Heart left ventricle (tissue), 16 donors: ENCODE measurements at regions of chr17 and their contacts with region 1.

Region 1: GRCh38 chr17:14300575-14301278 is at the start of gene HS3ST3B1:
- DNase-seq: peak; percentile 98 to 99 (median 98)
- ATAC-seq: peak; percentile 93 to 97 (median 96)
- H3K4me3 ChIP-seq: peak within 1 kb of the TSS; percentile 53 to 78 (median 62)
- H3K27ac ChIP-seq: peak within 1 kb of the TSS; percentile 35 to 90 (median 74)
- H3K4me1 ChIP-seq: peaks cover 0 to 76% (median 48%) of the 10 kb centered on the region in 12 donors
- H3K27me3 ChIP-seq: peaks cover 26 to 86% (median 63%) of the 10 kb centered on the region in 9 donors
- CTCF ChIP-seq: peak in 2 of 12 donors; percentile 22 to 33
- POLR2A ChIP-seq: peak; percentile 33 to 86
- total RNA-seq, gene HS3ST3B1: 1.8 to 3.9 (median 3.4) TPM

Region 2: GRCh38 chr17:13031718-13032350 is 1268.9 kb before region 1 on chr17:
- intact Hi-C with region 1: loop called in 2 of 10 experiments (anchors 10 kb)
- DNase-seq: peak in 4 of 5 donors; percentile 25 to 49 (median 34)
- ATAC-seq: peak in 3 of 4 donors; percentile 61 to 80 (median 65)
- H3K4me3 ChIP-seq: no peak overlapping the region
- H3K27ac ChIP-seq: no peak overlapping the region
- H3K4me1 ChIP-seq: peaks cover 0 to 6% (median 0%) of the 10 kb centered on the region in 12 donors
- H3K27me3 ChIP-seq: peaks cover 0 to 6% (median 0%) of the 10 kb centered on the region in 9 donors
- CTCF ChIP-seq: peak; percentile 66 to 86 (median 78)
- POLR2A ChIP-seq: no peak

Region 3: DNA sequence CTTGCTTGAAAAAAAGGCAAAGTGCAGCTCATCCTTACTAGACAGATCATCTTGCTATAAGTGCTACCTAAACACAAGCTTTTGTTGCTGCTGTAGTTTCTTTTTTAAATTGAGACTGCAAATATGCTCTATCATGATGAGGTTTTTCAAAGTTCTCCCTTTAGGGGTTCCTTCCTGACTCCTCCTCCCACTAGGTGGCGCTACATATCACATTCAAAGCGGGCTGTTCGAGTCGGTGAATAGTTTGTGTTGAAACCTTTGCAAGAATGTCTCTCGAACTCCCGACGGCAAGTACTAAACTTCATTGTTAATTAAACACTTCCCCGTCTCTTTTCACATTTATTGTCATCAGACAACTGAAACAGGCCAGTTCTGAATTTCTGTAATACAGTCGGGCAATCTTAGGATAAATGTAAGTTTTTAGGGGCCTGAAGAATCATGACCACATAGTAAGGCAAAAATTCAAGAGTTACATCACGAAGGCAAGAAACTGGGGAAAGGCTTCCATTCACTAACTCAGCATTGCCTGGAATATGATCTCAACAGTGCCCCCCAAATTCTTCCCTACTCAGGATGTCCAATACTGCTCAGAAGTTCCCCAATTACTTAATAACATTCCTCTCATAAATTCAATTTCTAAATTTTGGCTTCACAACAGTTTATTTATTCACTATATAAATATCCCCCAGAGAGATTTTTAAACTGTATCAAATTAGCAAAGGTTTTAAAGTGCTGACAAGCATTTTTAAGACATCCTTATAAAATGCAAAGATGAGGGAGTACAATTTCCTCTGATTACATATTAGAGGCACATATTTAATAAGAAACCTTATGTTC is 705.7 kb before region 1 on chr17:
- intact Hi-C with region 1: loop called (anchors 1 to 5 kb)
- DNase-seq: peak; percentile 55 to 77 (median 74)
- ATAC-seq: peak in 3 of 4 donors; percentile 65 to 73 (median 71)
- H3K4me3 ChIP-seq: no peak overlapping the region
- H3K27ac ChIP-seq: no peak overlapping the region
- H3K4me1 ChIP-seq: peaks cover 0 to 20% (median 3%) of the 10 kb centered on the region in 12 donors
- H3K27me3 ChIP-seq: peaks cover 0 to 27% (median 3%) of the 10 kb centered on the region in 9 donors
- CTCF ChIP-seq: peak; percentile 80 to 94 (median 87)
- POLR2A ChIP-seq: no peak

Region 4: DNA sequence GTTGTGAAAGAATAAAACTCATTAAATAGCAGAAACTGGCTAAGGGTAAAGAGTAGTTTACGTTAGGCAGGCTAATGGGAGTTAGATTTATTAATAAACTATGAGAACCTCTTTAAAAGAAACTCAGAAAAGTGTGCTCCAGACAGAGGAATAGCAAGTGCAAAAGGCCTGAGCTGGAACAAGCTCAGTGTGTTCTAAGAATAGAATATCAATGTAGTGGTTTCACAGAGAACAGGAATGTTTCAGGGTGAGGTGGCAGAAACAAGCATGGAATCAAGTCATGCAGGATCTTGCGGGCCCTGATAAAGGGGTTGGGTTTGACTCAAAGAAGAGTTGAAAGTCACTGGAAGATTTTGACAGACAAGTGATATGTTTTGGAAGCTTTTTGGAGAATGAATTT is 535.0 kb before region 1 on chr17:
- intact Hi-C with region 1: loop called in 1 of 10 experiments (anchors 10 kb)
- DNase-seq: peak in 1 of 5 donors; percentile 8
- ATAC-seq: peak; percentile 60 to 81 (median 78)
- H3K4me3 ChIP-seq: no peak overlapping the region
- H3K27ac ChIP-seq: peak overlapping the region in 7 of 12 donors; percentile 29 to 70 (median 39)
- H3K4me1 ChIP-seq: peaks cover 0 to 13% (median 0%) of the 10 kb centered on the region in 12 donors
- H3K27me3 ChIP-seq: no peaks in the 10 kb centered on the region
- CTCF ChIP-seq: no peak
- POLR2A ChIP-seq: no peak

Region 5: GRCh38 chr17:14211801-14212200 is 88.9 kb before region 1 on chr17:
- intact Hi-C with region 1: loop called in 1 of 10 experiments (anchors 10 kb)
- DNase-seq: peak in 4 of 5 donors; percentile 25 to 70 (median 42)
- ATAC-seq: peak in 2 of 4 donors; percentile 12 to 32
- H3K4me3 ChIP-seq: no peak overlapping the region
- H3K27ac ChIP-seq: no peak overlapping the region
- H3K4me1 ChIP-seq: peaks cover 0 to under 1% (median 0%) of the 10 kb centered on the region in 12 donors
- H3K27me3 ChIP-seq: no peaks in the 10 kb centered on the region
- CTCF ChIP-seq: peak in 11 of 12 donors; percentile 27 to 60 (median 42)
- POLR2A ChIP-seq: no peak

Region 6: DNA sequence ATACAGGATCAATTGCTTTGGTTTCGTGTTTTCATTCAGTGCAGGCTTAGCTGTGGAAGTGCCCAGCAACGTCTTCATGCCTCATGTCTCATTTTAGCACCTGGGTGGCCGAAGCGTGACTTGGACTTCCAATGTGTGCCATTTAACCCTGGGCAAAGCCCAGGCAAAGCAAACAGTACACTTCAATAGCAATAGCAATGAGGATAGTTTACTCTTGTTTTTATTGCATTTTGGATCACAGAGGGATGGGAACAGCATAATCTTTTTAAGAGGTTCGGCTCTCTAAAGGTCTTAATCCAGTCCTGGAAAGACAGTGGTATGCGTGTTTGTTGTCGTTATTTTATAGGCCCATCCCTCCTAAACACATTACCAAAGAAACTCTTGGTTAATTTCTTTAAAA is 86.3 kb after region 1 on chr17:
- intact Hi-C with region 1: no loop called
- DNase-seq: no peak
- ATAC-seq: no peak
- H3K4me3 ChIP-seq: no peak overlapping the region
- H3K27ac ChIP-seq: no peak overlapping the region
- H3K4me1 ChIP-seq: no peaks in the 10 kb centered on the region
- H3K27me3 ChIP-seq: no peaks in the 10 kb centered on the region
- CTCF ChIP-seq: no peak
- POLR2A ChIP-seq: no peak

Region 7: DNA sequence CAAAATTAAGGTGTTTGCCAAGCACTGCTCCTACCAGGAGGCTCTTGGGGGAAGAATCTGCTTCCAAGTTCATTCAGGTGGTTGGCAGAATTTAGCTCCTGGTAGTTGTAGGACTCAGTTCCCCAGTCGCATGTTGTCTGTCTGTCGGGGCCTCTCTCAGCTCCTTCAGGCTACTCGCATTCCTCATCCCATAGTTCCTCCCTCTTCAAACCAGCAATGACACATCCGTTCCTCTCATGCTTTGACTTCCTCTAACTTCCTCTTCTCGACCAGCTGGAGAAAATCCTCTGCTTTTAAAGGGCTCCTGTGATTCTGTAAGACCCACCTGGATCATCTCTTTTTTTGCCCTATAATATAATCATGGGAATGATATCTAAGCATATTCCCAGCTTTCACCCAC is 856.3 kb after region 1 on chr17:
- intact Hi-C with region 1: loop called in 1 of 10 experiments (anchors 10 kb)
- DNase-seq: no peak
- ATAC-seq: no peak
- H3K4me3 ChIP-seq: no peak overlapping the region
- H3K27ac ChIP-seq: no peak overlapping the region
- H3K4me1 ChIP-seq: peaks cover 0 to 4% (median 0%) of the 10 kb centered on the region in 12 donors
- H3K27me3 ChIP-seq: peaks cover 0 to 5% (median 0%) of the 10 kb centered on the region in 9 donors
- CTCF ChIP-seq: no peak
- POLR2A ChIP-seq: no peak